Ascending aorta (tissue), 2 donors: ENCODE measurements at regions of chr14 and their contacts with region 1.

Region 1: DNA sequence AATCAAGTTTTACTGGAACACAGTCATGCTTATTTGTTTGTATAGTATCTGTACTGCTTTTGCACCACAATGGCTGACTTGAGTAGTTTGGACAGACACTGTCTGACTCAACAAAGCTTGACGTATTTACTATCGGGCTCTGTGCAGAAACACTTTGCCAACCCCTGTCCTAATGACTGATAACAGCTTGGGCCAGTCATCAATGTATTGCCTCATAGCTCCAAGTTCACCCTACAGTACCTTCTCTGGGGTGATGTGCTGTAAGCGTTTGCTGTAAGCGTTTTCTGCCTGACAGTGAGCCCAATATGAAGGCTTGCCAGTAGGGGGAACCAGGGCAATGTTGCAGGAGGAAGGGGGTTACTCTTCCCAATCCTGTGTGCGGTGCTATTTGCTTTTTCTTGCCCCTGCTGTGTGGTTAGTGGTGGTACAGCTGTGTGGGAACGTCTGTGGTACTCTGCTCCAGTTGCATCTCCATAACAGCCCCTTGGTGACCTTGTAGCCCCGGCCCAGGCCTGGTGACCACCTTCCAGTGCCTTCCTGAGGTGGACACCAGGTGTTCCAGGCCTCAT is 5.4 kb upstream of the CCDC177 start:
- DNase-seq: peak in 1 of 2 donors; percentile 71
- H3K4me3 ChIP-seq: no peak overlapping the region
- H3K27ac ChIP-seq: no peak overlapping the region
- H3K4me1 ChIP-seq: no peaks in the 10 kb centered on the region
- H3K27me3 ChIP-seq: no peaks in the 10 kb centered on the region
- CTCF ChIP-seq: peak in 2 of 3 experiments; percentile 7 to 20

Region 2: DNA sequence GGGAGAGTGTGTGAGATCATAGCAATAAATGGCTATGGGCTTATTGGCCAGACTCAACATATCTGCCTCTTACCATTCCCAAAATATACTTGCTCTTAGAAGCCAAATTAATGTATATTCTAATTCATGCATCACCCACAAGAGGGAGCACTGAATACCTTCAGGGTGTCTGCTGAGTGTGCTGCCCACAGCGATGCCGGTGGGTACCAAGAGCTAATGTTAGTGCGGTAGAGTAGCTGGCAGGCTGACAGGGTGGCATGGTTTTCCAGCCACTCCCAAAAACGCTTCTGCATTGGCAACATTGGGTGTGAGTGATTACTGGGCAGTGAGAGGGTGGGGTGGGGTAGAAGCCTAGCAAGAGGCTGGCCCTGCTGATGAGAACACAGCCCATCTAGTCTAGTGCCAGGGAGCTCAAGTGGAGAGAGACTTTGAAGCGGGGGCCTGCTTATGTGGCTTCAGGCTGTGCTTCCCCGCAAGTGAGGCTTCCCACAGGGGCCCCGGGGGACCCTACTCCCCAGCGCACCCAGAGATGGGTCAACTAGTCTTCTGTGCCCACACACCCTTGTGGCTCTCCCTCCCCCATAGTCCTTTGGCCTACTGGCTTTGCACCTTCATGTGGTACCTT is 104.8 kb before region 1 on chr14:
- intact Hi-C with region 1: no loop called
- DNase-seq: no peak
- H3K4me3 ChIP-seq: no peak overlapping the region
- H3K27ac ChIP-seq: no peak overlapping the region
- H3K4me1 ChIP-seq: no peaks in the 10 kb centered on the region
- H3K27me3 ChIP-seq: no peaks in the 10 kb centered on the region
- CTCF ChIP-seq: peak in 1 of 3 experiments; percentile 11

Region 3: GRCh38 chr14:69726761-69727511 is 146.8 kb after region 1 on chr14:
- intact Hi-C with region 1: loop called (anchors 1 kb)
- DNase-seq: peak in 1 of 2 donors; percentile 90
- H3K4me3 ChIP-seq: peak overlapping the region; percentile 43 to 49
- H3K27ac ChIP-seq: peak overlapping the region in 1 of 2 donors; percentile 57
- H3K4me1 ChIP-seq: peaks cover 0 to 10% of the 10 kb centered on the region in 2 donors
- H3K27me3 ChIP-seq: no peaks in the 10 kb centered on the region
- CTCF ChIP-seq: peak; percentile 95 to 100 (median 98)

Region 4: DNA sequence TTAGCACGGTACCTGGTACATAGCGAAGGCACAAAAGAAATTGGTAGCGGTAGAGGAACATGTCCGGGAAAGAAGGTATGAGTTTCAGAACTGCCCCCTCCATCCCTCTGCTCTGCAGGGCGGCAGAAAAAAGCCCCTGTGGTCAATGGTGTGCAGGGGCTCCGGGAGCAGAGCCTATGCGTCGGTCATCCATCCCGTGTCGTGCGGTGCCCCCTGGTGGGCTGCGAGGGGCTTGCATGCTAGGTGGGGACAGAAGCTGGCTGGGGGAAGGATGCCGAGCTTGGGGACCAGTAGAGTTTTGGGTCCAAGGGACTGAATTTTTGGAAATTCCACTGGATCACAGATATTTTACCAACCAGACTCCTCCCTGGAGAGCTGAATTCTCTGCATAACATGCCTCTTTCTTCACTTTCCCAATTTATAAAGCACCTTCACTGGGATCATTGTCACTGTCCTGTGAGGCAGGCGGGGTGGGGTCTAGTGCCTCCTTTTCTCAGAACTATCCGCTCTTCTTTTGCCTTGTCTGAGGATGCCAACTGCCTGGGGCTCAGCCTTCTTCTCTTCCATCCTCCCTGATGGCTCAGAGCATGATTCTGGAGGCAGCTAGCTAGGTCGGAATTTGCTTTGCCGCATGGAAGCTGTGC is 447.8 kb after region 1 on chr14:
- intact Hi-C with region 1: no loop called
- DNase-seq: peak in 1 of 2 donors; percentile 74
- H3K4me3 ChIP-seq: no peak overlapping the region
- H3K27ac ChIP-seq: no peak overlapping the region
- H3K4me1 ChIP-seq: no peaks in the 10 kb centered on the region
- H3K27me3 ChIP-seq: no peaks in the 10 kb centered on the region
- CTCF ChIP-seq: peak; percentile 63 to 68 (median 68)